Activated naive CD4-positive, alpha-beta T cell treated with anti-CD3 and anti-CD28 coated beads for 36 hours (primary cell): ENCODE measurements at regions of chr2 and their contacts with region 1.

Region 1: GRCh38 chr2:53751728-53752127 is 15.9 kb upstream of the CHAC2 start:
- DNase-seq: no peak
- H3K4me3 Mint-ChIP-seq: no peak overlapping the region
- H3K27ac Mint-ChIP-seq: no peak overlapping the region
- H3K4me1 Mint-ChIP-seq: peaks cover 21% of the 10 kb centered on the region
- H3K27me3 Mint-ChIP-seq: no peaks in the 10 kb centered on the region

Region 2: DNA sequence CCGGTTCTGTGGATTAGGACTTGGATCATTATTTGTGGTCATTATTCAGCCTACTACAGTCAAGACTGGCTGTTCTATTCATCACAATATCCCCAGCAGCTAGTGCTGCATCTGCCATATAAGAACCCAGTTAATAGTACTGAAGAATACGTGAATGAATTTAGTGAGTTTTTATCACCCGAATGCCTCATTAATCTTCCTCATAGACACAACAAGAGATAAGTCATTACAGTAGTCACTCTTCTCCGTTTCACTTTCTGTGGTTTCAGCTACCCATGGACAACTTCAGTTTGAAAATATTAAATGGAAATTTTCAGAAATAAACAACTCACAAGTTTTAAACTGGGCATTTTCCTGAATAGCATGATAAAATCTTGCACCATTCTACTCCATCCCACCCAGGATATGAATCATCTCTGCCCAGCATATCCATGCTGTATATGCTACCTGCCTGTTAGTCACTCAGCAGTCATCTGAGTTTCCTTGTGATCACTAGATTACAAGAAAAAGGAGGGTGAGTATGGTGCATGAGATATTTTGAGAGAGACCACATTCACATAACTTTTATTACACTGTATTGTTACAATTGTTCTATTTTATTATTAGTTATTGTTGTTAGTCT is 347.8 kb before region 1 on chr2:
- CTCF ChIA-PET with region 1: no interaction called
- intact Hi-C with region 1: loop called (anchors 5 kb)
- DNase-seq: no peak
- H3K4me3 Mint-ChIP-seq: no peak overlapping the region
- H3K27ac Mint-ChIP-seq: no peak overlapping the region
- H3K4me1 Mint-ChIP-seq: no peaks in the 10 kb centered on the region
- H3K27me3 Mint-ChIP-seq: no peaks in the 10 kb centered on the region

Region 3: GRCh38 chr2:53767405-53768241 is 15.9 kb after region 1 on chr2 and contains the start of gene CHAC2:
- CTCF ChIA-PET with region 1: no interaction called
- intact Hi-C with region 1: loop called (anchors 1 kb)
- DNase-seq: peak; percentile 91
- H3K4me3 Mint-ChIP-seq: peak within 1 kb of the TSS; percentile 94
- H3K27ac Mint-ChIP-seq: peak within 1 kb of the TSS; percentile 93
- H3K4me1 Mint-ChIP-seq: peaks cover 26% of the 10 kb centered on the region
- H3K27me3 Mint-ChIP-seq: no peaks in the 10 kb centered on the region
- total RNA-seq, gene CHAC2: 11.5 to 12.4 TPM

Region 4: GRCh38 chr2:54348646-54349045 is 596.9 kb after region 1 on chr2:
- CTCF ChIA-PET with region 1: no interaction called
- intact Hi-C with region 1: no loop called
- DNase-seq: no peak
- H3K4me3 Mint-ChIP-seq: no peak overlapping the region
- H3K27ac Mint-ChIP-seq: no peak overlapping the region
- H3K4me1 Mint-ChIP-seq: no peaks in the 10 kb centered on the region
- H3K27me3 Mint-ChIP-seq: peaks cover 4% of the 10 kb centered on the region